ENCODE measurements at regions of chr2 and their contacts with region 1.

Region 1: DNA sequence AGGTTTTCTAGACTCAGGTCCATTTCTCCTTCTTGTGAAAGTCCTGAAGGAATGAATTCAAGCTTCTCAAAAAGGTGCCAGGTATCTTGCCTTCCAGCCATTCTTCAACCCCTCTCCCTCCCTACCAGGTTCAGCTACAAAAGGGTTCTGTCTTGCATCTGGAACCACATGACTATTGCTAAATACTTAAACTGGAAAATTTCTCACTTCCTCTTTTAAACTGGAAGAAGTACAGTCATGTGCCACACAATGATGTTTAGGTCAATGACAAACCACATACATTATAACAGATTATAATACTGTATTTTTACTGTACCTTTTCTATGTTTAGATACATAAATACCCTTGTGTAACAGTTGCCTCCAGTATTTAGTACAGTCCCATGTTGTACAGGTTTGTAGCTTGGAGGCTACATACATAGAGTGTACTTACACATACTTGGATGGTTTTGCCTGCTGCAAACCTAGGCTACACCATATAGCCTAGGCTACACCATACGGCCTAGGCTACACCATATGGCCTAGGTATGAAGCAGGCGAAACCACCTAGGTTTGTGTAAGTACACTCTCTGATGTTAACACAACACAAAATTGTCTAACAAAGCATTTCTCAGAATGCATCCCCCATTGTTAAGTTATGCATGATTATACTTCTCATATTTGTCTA is 142.0 kb upstream of the DNMT3A start:
- DNase-seq: peak; percentile 70
- ATAC-seq: peak; percentile 83
- H3K4me3 ChIP-seq: no peak overlapping the region
- H3K4me3 Mint-ChIP-seq: peak overlapping the region; percentile 37
- H3K27ac ChIP-seq: peak overlapping the region; percentile 28 to 37
- H3K27ac Mint-ChIP-seq: peak overlapping the region; percentile 80
- H3K4me1 ChIP-seq: peaks cover 20 to 24% of the 10 kb centered on the region in 2 donors
- H3K4me1 Mint-ChIP-seq: peaks cover 34% of the 10 kb centered on the region
- H3K27me3 ChIP-seq: no peaks in the 10 kb centered on the region
- H3K27me3 Mint-ChIP-seq: no peaks in the 10 kb centered on the region
- CTCF ChIP-seq: no peak

Region 2: DNA sequence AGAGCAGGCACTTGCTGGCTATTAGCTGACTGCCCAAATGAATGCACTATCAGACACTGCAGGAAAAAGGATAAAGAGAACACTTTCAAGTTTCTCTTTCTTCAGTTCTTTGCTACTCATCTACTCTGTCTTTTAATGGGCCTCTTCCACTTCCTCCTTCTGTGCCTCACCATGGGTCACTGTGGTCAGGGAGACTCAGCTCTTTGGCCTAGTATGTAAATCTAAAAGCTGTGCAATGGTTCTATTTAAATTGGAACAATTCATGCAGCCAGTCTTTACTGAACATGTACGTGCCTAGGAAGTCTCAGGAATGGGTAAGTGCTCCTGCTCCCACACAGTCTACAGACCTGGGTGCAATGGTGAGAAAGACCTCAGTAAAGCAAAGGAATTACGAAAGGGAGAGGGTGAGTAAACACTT is 62.9 kb before region 1 on chr2:
- CTCF ChIA-PET with region 1: interaction called, 3 read pairs
- POLR2A ChIA-PET with region 1: no interaction called
- intact Hi-C with region 1: loop called (anchors 2 kb)
- DNase-seq: peak; percentile 60
- ATAC-seq: peak; percentile 42
- H3K4me3 ChIP-seq: peak overlapping the region in 4 of 5 experiments; percentile 19 to 57 (median 34)
- H3K4me3 Mint-ChIP-seq: peak overlapping the region; percentile 84
- H3K27ac ChIP-seq: peak overlapping the region; percentile 89 to 94
- H3K27ac Mint-ChIP-seq: peak overlapping the region; percentile 96
- H3K4me1 ChIP-seq: peaks cover 79 to 86% of the 10 kb centered on the region in 2 donors
- H3K4me1 Mint-ChIP-seq: peaks cover 85% of the 10 kb centered on the region
- H3K27me3 ChIP-seq: no peaks in the 10 kb centered on the region
- H3K27me3 Mint-ChIP-seq: no peaks in the 10 kb centered on the region
- CTCF ChIP-seq: no peak

Measured in B cell (primary cell).